ENCODE measurements at regions of chr2 and their contacts with region 1.

Region 1: DNA sequence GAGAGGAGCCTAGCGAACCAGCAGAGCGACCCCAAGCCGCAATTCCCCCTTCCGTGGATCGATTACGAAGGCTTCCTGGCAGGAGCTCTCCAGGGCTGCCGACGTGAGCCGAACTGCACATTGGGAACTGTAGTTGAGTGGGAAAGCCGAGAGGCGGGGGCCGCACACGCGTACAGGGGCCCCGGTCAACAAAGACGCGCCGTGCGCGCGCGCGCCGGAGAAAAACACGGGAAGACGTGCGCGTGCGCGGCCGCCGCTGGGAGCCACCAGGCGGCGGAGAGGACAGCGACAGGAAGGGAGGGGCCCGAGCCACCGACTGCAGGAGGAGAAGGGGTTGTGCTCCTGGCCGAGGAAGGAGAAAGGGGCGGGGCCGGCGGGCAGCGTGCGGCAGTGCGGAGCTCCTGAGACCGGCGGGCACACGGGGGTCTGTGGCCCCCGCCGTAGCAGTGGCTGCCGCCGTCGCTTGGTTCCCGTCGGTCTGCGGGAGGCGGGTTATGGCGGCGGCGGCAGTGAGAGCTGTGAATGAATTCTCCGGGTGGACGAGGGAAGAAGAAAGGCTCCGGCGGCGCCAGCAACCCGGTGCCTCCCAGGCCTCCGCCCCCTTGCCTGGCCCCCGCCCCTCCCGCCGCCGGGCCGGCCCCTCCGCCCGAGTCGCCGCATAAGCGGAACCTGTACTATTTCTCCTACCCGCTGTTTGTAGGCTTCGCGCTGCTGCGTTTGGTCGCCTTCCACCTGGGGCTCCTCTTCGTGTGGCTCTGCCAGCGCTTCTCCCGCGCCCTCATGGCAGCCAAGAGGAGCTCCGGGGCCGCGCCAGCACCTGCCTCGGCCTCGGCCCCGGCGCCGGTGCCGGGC is at the start of gene SPAST:
- DNase-seq: peak; percentile 98
- ATAC-seq: peak; percentile 95 to 97
- total RNA-seq, gene SPAST: 8.0 to 9.2 TPM

Region 2: GRCh38 chr2:31886697-31887096 is 176.8 kb before region 1 on chr2:
- intact Hi-C with region 1: no loop called
- DNase-seq: no peak
- ATAC-seq: no peak

Region 3: DNA sequence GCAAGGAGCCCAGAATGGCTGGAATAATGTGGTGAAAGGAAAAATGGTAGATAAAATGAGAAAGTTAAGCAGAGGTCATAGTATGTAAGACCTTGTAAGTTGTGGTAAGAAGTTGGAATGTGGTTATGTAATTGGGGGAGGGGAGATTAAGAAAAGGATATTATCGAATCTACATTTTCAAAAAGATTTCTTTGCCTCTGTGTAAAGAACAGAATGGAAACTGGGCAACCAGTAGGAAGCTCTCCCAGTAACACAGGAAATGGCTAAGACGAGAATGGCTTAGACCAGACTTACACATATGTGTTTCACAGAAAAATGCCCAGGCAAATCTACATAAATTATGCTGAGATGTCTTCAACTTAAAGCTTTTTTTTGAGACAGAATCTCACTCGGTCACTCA is 65.9 kb before region 1 on chr2:
- intact Hi-C with region 1: no loop called
- DNase-seq: no peak
- ATAC-seq: no peak

Region 4: GRCh38 chr2:32010670-32011484 is 52.7 kb before region 1 on chr2 and contains the start of gene MEMO1:
- intact Hi-C with region 1: loop called in 1 of 2 experiments (anchors 5 kb)
- DNase-seq: peak; percentile 96
- ATAC-seq: peak; percentile 90 to 91
- total RNA-seq, gene MEMO1: 33.1 to 37.5 TPM

Region 5: GRCh38 chr2:32168513-32168912 is 105.0 kb after region 1 on chr2:
- intact Hi-C with region 1: loop called in 1 of 2 experiments (anchors 10 kb)
- DNase-seq: no peak
- ATAC-seq: no peak

Region 6: DNA sequence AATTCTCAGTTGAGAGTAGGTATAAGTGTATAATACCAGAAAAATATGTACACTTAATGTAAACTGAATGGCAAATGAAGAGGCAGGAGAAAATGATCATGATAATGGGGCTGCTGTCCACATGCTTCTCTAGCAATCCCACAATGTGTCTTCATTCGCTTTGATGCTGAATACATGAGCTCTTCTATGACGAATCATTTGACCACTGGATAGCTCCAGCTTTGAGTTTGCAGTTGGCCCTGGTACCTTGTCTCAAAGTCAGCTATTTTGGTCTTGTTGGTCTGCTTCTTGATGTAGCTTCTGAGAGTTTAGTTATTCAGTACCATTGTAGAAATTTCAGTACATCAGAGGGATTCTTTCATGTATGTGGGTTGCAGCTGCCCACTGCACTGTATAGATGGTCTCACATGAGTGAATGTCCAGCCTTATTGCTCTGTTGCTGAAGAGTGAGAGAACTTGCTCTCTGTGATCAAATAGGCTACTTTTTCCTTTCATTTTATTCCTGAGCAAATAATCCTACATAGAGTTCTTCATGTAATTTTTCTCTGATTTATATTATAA is 669.5 kb after region 1 on chr2:
- intact Hi-C with region 1: no loop called
- DNase-seq: no peak
- ATAC-seq: no peak

Measured in left cardiac atrium (tissue), 4 donors.